Pancreas (tissue), 10 donors: ENCODE measurements at regions of chr12 and their contacts with region 1.

Region 1: GRCh38 chr12:30985814-30986452 is 59.4 kb downstream of the TSPAN11 start:
- DNase-seq: peak in 4 of 6 donors; percentile 27 to 74 (median 55)
- ATAC-seq: peak in 3 of 4 donors; percentile 53 to 69 (median 62)
- H3K4me3 ChIP-seq: no peak overlapping the region
- H3K27ac ChIP-seq: no peak overlapping the region
- H3K4me1 ChIP-seq: peaks cover 3 to 12% (median 10%) of the 10 kb centered on the region in 3 donors
- H3K27me3 ChIP-seq: no peaks in the 10 kb centered on the region
- CTCF ChIP-seq: peak in 3 of 4 donors; percentile 26 to 47 (median 47)

Region 2: GRCh38 chr12:30706476-30706875 is 279.5 kb before region 1 on chr12:
- intact Hi-C with region 1: no loop called
- DNase-seq: no peak
- ATAC-seq: no peak
- H3K4me3 ChIP-seq: no peak overlapping the region
- H3K27ac ChIP-seq: no peak overlapping the region
- H3K4me1 ChIP-seq: no peaks in the 10 kb centered on the region
- H3K27me3 ChIP-seq: no peaks in the 10 kb centered on the region
- CTCF ChIP-seq: no peak

Region 3: GRCh38 chr12:30862486-30862885 is 123.4 kb before region 1 on chr12:
- intact Hi-C with region 1: loop called in 1 of 3 experiments (anchors 10 kb)
- DNase-seq: no peak
- ATAC-seq: no peak
- H3K4me3 ChIP-seq: no peak overlapping the region
- H3K27ac ChIP-seq: no peak overlapping the region
- H3K4me1 ChIP-seq: no peaks in the 10 kb centered on the region
- H3K27me3 ChIP-seq: no peaks in the 10 kb centered on the region
- CTCF ChIP-seq: no peak